Ovary (tissue), 10 donors: ENCODE measurements at regions of chr19 and their contacts with region 1.

Region 1: DNA sequence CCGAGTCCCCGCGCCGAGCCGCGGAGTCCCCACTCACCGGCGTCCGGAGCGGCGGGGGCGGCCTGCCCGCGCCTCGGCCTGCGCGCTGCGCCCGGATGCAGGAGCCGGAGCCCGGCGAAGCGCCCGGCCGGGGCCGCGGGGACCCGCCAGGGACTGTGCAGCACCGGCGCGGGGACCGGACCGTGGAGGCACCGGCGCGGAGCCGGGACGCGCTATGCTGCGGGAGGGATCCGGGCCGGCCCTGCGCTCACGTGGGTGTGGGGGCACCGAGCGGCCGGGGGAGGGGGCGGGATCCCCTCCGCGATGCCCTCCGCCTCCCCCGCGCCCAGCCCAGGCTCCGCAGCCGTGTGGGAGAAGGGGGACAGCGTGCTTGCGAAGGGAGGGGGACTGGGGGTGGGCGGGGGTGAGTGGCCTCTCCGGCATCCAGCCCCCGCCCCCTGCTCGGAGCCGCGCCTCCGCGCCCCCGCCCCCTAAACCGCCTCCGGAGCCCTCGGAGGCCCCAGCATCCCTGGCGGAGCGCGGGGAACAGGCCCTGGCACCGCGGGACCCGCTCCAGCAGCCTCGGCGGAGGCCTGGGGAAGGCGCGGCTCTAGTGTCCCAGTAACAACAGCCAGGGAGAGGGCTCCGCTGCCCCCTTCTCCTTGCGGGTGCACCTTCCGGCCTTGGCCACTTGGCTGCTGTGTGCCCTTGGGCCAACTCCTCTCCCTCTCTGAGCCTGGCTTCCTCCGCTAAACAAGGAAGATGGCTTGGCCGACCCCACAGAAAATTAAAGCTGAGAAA is at the start of gene SLC1A6:
- DNase-seq: no peak
- H3K4me3 ChIP-seq: no peak within 1 kb of the TSS
- H3K27ac ChIP-seq: no peak within 1 kb of the TSS
- H3K4me1 ChIP-seq: no peaks in the 10 kb centered on the region
- H3K27me3 ChIP-seq: no peaks in the 10 kb centered on the region
- CTCF ChIP-seq: no peak
- EP300 ChIP-seq: no peak
- POLR2A ChIP-seq: no peak
- total RNA-seq, gene SLC1A6: not detected

Region 2: GRCh38 chr19:13537454-13537853 is 1442.2 kb before region 1 on chr19:
- intact Hi-C with region 1: loop called in 1 of 4 experiments (anchors 5 kb)
- DNase-seq: no peak
- H3K4me3 ChIP-seq: no peak overlapping the region
- H3K27ac ChIP-seq: no peak overlapping the region
- H3K4me1 ChIP-seq: no peaks in the 10 kb centered on the region
- H3K27me3 ChIP-seq: no peaks in the 10 kb centered on the region
- CTCF ChIP-seq: no peak
- EP300 ChIP-seq: no peak
- POLR2A ChIP-seq: no peak

Region 3: GRCh38 chr19:15038297-15038696 is 58.6 kb after region 1 on chr19:
- intact Hi-C with region 1: no loop called
- DNase-seq: no peak
- H3K4me3 ChIP-seq: no peak overlapping the region
- H3K27ac ChIP-seq: no peak overlapping the region
- H3K4me1 ChIP-seq: no peaks in the 10 kb centered on the region
- H3K27me3 ChIP-seq: no peaks in the 10 kb centered on the region
- CTCF ChIP-seq: no peak
- EP300 ChIP-seq: no peak
- POLR2A ChIP-seq: no peak